CD14-positive monocyte (primary cell): ENCODE measurements at regions of chrX and their contacts with region 1.

Region 1: GRCh38 chrX:17046478-17047097 is 100.1 kb downstream of the REPS2 start:
- DNase-seq: peak; percentile 38 to 60 (median 57)
- H3K4me3 ChIP-seq: no peak overlapping the region
- H3K4me3 Mint-ChIP-seq: no peak overlapping the region
- H3K27ac ChIP-seq: no peak overlapping the region
- H3K27ac Mint-ChIP-seq: no peak overlapping the region
- H3K4me1 ChIP-seq: no peaks in the 10 kb centered on the region
- H3K4me1 Mint-ChIP-seq: peaks cover 2% of the 10 kb centered on the region
- H3K27me3 ChIP-seq: peaks cover 0 to 2% of the 10 kb centered on the region in 2 donors
- H3K27me3 Mint-ChIP-seq: peaks cover 0 to 11% (median 0%) of the 10 kb centered on the region in 3 donors
- CTCF ChIP-seq: peak; percentile 65

Region 2: DNA sequence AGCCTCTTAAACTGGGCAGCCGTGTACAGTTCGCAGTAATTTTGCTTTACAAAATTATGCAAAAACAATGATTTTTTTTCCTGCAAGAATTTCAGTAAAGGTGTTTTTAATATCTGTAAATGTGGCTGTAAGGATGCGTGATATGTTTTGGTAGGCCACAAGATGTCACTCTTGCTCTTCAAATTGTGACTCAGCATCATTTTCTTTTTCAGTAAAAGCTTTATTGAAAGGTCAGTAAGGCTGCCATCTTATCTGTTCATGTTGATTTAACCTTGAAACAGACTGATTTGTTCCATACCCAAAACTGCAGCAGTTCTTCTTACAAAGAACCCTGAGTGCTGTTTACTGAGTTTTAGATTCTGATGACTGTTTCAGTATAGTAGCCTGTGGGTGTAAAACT is 220.4 kb before region 1 on chrX:
- intact Hi-C with region 1: loop called (anchors 2 to 10 kb)
- DNase-seq: peak in 2 of 3 donors; percentile 12 to 21
- H3K4me3 ChIP-seq: no peak overlapping the region
- H3K4me3 Mint-ChIP-seq: no peak overlapping the region
- H3K27ac ChIP-seq: no peak overlapping the region
- H3K27ac Mint-ChIP-seq: peak overlapping the region in 1 of 7 donors; percentile 58
- H3K4me1 ChIP-seq: peaks cover 0 to 7% of the 10 kb centered on the region in 2 donors
- H3K4me1 Mint-ChIP-seq: peaks cover 11% of the 10 kb centered on the region
- H3K27me3 ChIP-seq: peaks cover 0 to 2% of the 10 kb centered on the region in 2 donors
- H3K27me3 Mint-ChIP-seq: peaks cover 0 to 26% (median 1%) of the 10 kb centered on the region in 3 donors
- CTCF ChIP-seq: peak; percentile 52

Region 3: GRCh38 chrX:16836371-16836770 is 210.2 kb before region 1 on chrX:
- intact Hi-C with region 1: no loop called
- DNase-seq: peak; percentile 10 to 25 (median 18)
- H3K4me3 ChIP-seq: no peak overlapping the region
- H3K4me3 Mint-ChIP-seq: no peak overlapping the region
- H3K27ac ChIP-seq: no peak overlapping the region
- H3K27ac Mint-ChIP-seq: peak overlapping the region in 2 of 7 donors; percentile 10 to 71
- H3K4me1 ChIP-seq: no peaks in the 10 kb centered on the region
- H3K4me1 Mint-ChIP-seq: peaks cover 2% of the 10 kb centered on the region
- H3K27me3 ChIP-seq: peaks cover 0 to 10% of the 10 kb centered on the region in 2 donors
- H3K27me3 Mint-ChIP-seq: peaks cover 0 to 35% (median 0%) of the 10 kb centered on the region in 3 donors
- CTCF ChIP-seq: peak; percentile 31

Region 4: GRCh38 chrX:16882702-16883486 is 163.7 kb before region 1 on chrX:
- intact Hi-C with region 1: loop called (anchors 5 kb)
- DNase-seq: peak in 2 of 3 donors; percentile 53 to 55
- H3K4me3 ChIP-seq: peak overlapping the region; percentile 43 to 71 (median 49)
- H3K4me3 Mint-ChIP-seq: peak overlapping the region; percentile 82 to 87
- H3K27ac ChIP-seq: peak overlapping the region in 1 of 2 donors; percentile 30
- H3K27ac Mint-ChIP-seq: peak overlapping the region in 4 of 7 donors; percentile 37 to 70 (median 66)
- H3K4me1 ChIP-seq: peaks cover 0 to 5% of the 10 kb centered on the region in 2 donors
- H3K4me1 Mint-ChIP-seq: peaks cover 10% of the 10 kb centered on the region
- H3K27me3 ChIP-seq: peaks cover 0 to 35% of the 10 kb centered on the region in 2 donors
- H3K27me3 Mint-ChIP-seq: peaks cover 0 to 44% (median 0%) of the 10 kb centered on the region in 3 donors
- CTCF ChIP-seq: peak; percentile 73

Region 5: GRCh38 chrX:16946361-16946964 is 100.1 kb before region 1 on chrX and contains the start of gene REPS2:
- intact Hi-C with region 1: loop called in 1 of 2 experiments (anchors 10 kb)
- DNase-seq: peak; percentile 64 to 79 (median 69)
- H3K4me3 ChIP-seq: peak within 1 kb of the TSS; percentile 64 to 78 (median 66)
- H3K4me3 Mint-ChIP-seq: peak within 1 kb of the TSS; percentile 95
- H3K27ac ChIP-seq: peak within 1 kb of the TSS; percentile 9 to 29
- H3K27ac Mint-ChIP-seq: peak within 1 kb of the TSS in 6 of 7 donors; percentile 6 to 88 (median 68)
- H3K4me1 ChIP-seq: peaks cover 17 to 19% of the 10 kb centered on the region in 2 donors
- H3K4me1 Mint-ChIP-seq: peaks cover 12% of the 10 kb centered on the region
- H3K27me3 ChIP-seq: no peaks in the 10 kb centered on the region
- H3K27me3 Mint-ChIP-seq: peaks cover 0 to 38% (median 2%) of the 10 kb centered on the region in 3 donors
- CTCF ChIP-seq: no peak
- polyA plus RNA-seq, gene REPS2: 2.1 to 4.7 (median 3.6) TPM